SK-N-SH (cell line): ENCODE measurements at regions of chr15 and their contacts with region 1.

Region 1: GRCh38 chr15:82709421-82710207 is at the start of gene AP3B2:
- DNase-seq: peak; percentile 97
- H3K4me3 ChIP-seq: peak within 1 kb of the TSS; percentile 78 to 84
- H3K27ac ChIP-seq: peak within 1 kb of the TSS in 1 of 2 experiments; percentile 75; a peak in 2 of 4 replicates
- H3K4me1 ChIP-seq: peaks cover 0 to 19% of the 10 kb centered on the region in 2 experiments; a peak in 1 of 4 replicates
- H3K27me3 ChIP-seq: no peaks in the 10 kb centered on the region
- CTCF ChIP-seq: no peak
- EP300 ChIP-seq: no peak
- RAD21 ChIP-seq: no peak
- polyA plus RNA-seq, gene AP3B2: 0.77 and 1.8 TPM in 2 replicates

Region 2: DNA sequence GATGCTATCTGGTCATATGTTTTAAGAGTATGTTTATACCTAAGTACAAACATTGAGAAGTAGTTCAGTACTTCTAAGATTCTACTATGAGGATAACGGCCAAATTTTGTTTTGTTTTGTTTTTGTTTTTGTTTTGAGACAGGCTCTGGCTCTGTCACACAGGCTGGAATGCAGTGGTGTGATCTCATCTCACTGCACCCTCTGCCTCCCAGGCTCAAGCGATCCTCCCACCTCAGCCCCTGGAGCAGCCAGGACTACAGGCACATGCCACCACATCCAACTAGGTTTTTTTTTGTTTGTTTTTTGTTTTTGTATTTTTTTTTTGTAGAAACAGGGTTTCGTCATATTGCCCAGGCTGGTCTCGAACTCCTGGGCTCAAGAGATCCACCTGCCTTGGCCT is 121.8 kb before region 1 on chr15:
- CTCF ChIA-PET with region 1: no interaction called
- POLR2A ChIA-PET with region 1: no interaction called
- DNase-seq: no peak
- H3K4me3 ChIP-seq: no peak overlapping the region
- H3K27ac ChIP-seq: no peak overlapping the region
- H3K4me1 ChIP-seq: no peaks in the 10 kb centered on the region
- H3K27me3 ChIP-seq: no peaks in the 10 kb centered on the region
- CTCF ChIP-seq: no peak
- EP300 ChIP-seq: no peak
- RAD21 ChIP-seq: no peak

Region 3: GRCh38 chr15:82726816-82727215 is 17.2 kb after region 1 on chr15:
- CTCF ChIA-PET with region 1: no interaction called
- POLR2A ChIA-PET with region 1: no interaction called
- DNase-seq: no peak
- H3K4me3 ChIP-seq: no peak overlapping the region
- H3K27ac ChIP-seq: no peak overlapping the region
- H3K4me1 ChIP-seq: no peaks in the 10 kb centered on the region
- H3K27me3 ChIP-seq: no peaks in the 10 kb centered on the region
- CTCF ChIP-seq: no peak
- EP300 ChIP-seq: no peak
- RAD21 ChIP-seq: no peak

Region 4: GRCh38 chr15:82749951-82750830 is 40.6 kb after region 1 on chr15:
- CTCF ChIA-PET with region 1: interaction called, 3 read pairs
- POLR2A ChIA-PET with region 1: interaction called, 10 read pairs
- DNase-seq: peak; percentile 88
- H3K4me3 ChIP-seq: peak overlapping the region; percentile 83 to 84
- H3K27ac ChIP-seq: peak overlapping the region; percentile 79 to 93
- H3K4me1 ChIP-seq: peaks cover 3 to 6% of the 10 kb centered on the region in 2 experiments; a peak in 2 of 4 replicates
- H3K27me3 ChIP-seq: no peaks in the 10 kb centered on the region
- CTCF ChIP-seq: no peak
- EP300 ChIP-seq: peak in 1 of 2 experiments; percentile 80; a peak in 2 of 4 replicates
- RAD21 ChIP-seq: no peak

Region 5: GRCh38 chr15:82792068-82792467 is 82.5 kb after region 1 on chr15:
- CTCF ChIA-PET with region 1: no interaction called
- POLR2A ChIA-PET with region 1: no interaction called
- DNase-seq: no peak
- H3K4me3 ChIP-seq: no peak overlapping the region
- H3K27ac ChIP-seq: no peak overlapping the region
- H3K4me1 ChIP-seq: no peaks in the 10 kb centered on the region
- H3K27me3 ChIP-seq: no peaks in the 10 kb centered on the region
- CTCF ChIP-seq: no peak
- EP300 ChIP-seq: no peak
- RAD21 ChIP-seq: no peak